B cell (primary cell): ENCODE measurements at regions of chr16 and their contacts with region 1.

Region 1: GRCh38 chr16:12067714-12068401 is 91.3 kb downstream of the SNX29 start:
- DNase-seq: peak; percentile 84
- ATAC-seq: peak; percentile 91
- H3K4me3 ChIP-seq: no peak overlapping the region
- H3K4me3 Mint-ChIP-seq: no peak overlapping the region
- H3K27ac ChIP-seq: no peak overlapping the region
- H3K27ac Mint-ChIP-seq: peak overlapping the region; percentile 61
- H3K4me1 ChIP-seq: peaks cover 0 to 4% of the 10 kb centered on the region in 2 donors
- H3K4me1 Mint-ChIP-seq: peaks cover 21% of the 10 kb centered on the region
- H3K27me3 ChIP-seq: no peaks in the 10 kb centered on the region
- H3K27me3 Mint-ChIP-seq: no peaks in the 10 kb centered on the region
- CTCF ChIP-seq: peak; percentile 94

Region 2: GRCh38 chr16:11639925-11640899 is 427.6 kb before region 1 on chr16:
- CTCF ChIA-PET with region 1: no interaction called
- POLR2A ChIA-PET with region 1: no interaction called
- intact Hi-C with region 1: no loop called
- DNase-seq: no peak
- ATAC-seq: no peak
- H3K4me3 ChIP-seq: no peak overlapping the region
- H3K4me3 Mint-ChIP-seq: no peak overlapping the region
- H3K27ac ChIP-seq: no peak overlapping the region
- H3K27ac Mint-ChIP-seq: no peak overlapping the region
- H3K4me1 ChIP-seq: peaks cover 7 to 9% of the 10 kb centered on the region in 2 donors
- H3K4me1 Mint-ChIP-seq: peaks cover 6% of the 10 kb centered on the region
- H3K27me3 ChIP-seq: no peaks in the 10 kb centered on the region
- H3K27me3 Mint-ChIP-seq: no peaks in the 10 kb centered on the region
- CTCF ChIP-seq: no peak

Region 3: DNA sequence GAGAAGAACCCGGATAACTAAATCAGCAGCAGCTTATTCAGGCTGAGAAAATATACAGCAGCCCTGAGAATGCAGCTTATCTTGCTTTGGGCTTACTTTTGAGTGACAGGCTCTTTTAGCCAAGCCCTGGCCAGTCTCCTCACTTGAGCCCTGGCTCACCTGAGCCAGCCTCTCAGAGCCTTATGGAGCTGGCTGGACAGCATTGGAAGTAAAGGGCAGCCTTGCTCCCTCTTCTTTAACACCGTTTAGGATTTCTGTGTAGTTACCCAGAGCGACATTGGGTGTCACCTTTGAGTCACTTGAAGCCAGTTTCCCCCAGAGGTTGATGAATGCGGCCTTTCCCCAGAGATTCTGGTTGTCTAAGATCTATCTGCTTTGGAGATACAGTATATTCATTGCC is 118.3 kb before region 1 on chr16:
- CTCF ChIA-PET with region 1: interaction called, 250 read pairs
- POLR2A ChIA-PET with region 1: interaction called, 4 read pairs
- intact Hi-C with region 1: loop called (anchors 1 kb)
- DNase-seq: peak; percentile 78
- ATAC-seq: peak; percentile 91
- H3K4me3 ChIP-seq: no peak overlapping the region
- H3K4me3 Mint-ChIP-seq: no peak overlapping the region
- H3K27ac ChIP-seq: no peak overlapping the region
- H3K27ac Mint-ChIP-seq: peak overlapping the region; percentile 64
- H3K4me1 ChIP-seq: peaks cover 13 to 14% of the 10 kb centered on the region in 2 donors
- H3K4me1 Mint-ChIP-seq: peaks cover 9% of the 10 kb centered on the region
- H3K27me3 ChIP-seq: no peaks in the 10 kb centered on the region
- H3K27me3 Mint-ChIP-seq: no peaks in the 10 kb centered on the region
- CTCF ChIP-seq: peak; percentile 87

Region 4: GRCh38 chr16:11972128-11972527 is 95.7 kb before region 1 on chr16:
- CTCF ChIA-PET with region 1: interaction called, 25 read pairs
- POLR2A ChIA-PET with region 1: no interaction called
- intact Hi-C with region 1: loop called (anchors 5 kb)
- DNase-seq: no peak
- ATAC-seq: no peak
- H3K4me3 ChIP-seq: no peak overlapping the region
- H3K4me3 Mint-ChIP-seq: no peak overlapping the region
- H3K27ac ChIP-seq: no peak overlapping the region
- H3K27ac Mint-ChIP-seq: peak overlapping the region; percentile 15
- H3K4me1 ChIP-seq: peaks cover 32 to 49% of the 10 kb centered on the region in 2 donors
- H3K4me1 Mint-ChIP-seq: peaks cover 39% of the 10 kb centered on the region
- H3K27me3 ChIP-seq: no peaks in the 10 kb centered on the region
- H3K27me3 Mint-ChIP-seq: no peaks in the 10 kb centered on the region
- CTCF ChIP-seq: peak; percentile 12

Region 5: DNA sequence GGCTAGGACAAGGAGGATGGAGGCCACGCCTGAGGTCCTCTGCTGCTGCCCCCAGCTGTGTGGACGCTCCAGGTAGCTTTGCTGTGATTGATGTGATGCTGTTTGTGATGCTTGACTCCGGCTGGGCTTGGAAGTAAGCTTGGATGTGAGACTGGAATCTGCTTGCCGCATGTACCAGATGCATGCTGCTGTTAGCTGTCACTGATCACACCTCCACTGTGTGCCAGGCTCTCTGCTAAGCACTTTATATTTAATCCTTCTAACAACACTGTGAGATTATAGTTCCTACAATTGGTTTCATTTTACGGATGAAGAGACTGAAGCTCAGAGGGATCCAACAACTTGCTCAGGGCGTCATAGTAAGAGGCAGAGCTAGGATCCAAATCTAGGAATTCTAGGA is 67.8 kb before region 1 on chr16:
- CTCF ChIA-PET with region 1: interaction called, 12 read pairs
- POLR2A ChIA-PET with region 1: no interaction called
- intact Hi-C with region 1: no loop called
- DNase-seq: no peak
- ATAC-seq: no peak
- H3K4me3 ChIP-seq: no peak overlapping the region
- H3K4me3 Mint-ChIP-seq: no peak overlapping the region
- H3K27ac ChIP-seq: no peak overlapping the region
- H3K27ac Mint-ChIP-seq: peak overlapping the region; percentile 16
- H3K4me1 ChIP-seq: peaks cover 31 to 38% of the 10 kb centered on the region in 2 donors
- H3K4me1 Mint-ChIP-seq: peaks cover 40% of the 10 kb centered on the region
- H3K27me3 ChIP-seq: no peaks in the 10 kb centered on the region
- H3K27me3 Mint-ChIP-seq: no peaks in the 10 kb centered on the region
- CTCF ChIP-seq: no peak

Region 6: GRCh38 chr16:12057266-12057665 is 10.6 kb before region 1 on chr16:
- CTCF ChIA-PET with region 1: interaction called, 42 read pairs
- POLR2A ChIA-PET with region 1: no interaction called
- intact Hi-C with region 1: no loop called
- DNase-seq: no peak
- ATAC-seq: no peak
- H3K4me3 ChIP-seq: no peak overlapping the region
- H3K4me3 Mint-ChIP-seq: no peak overlapping the region
- H3K27ac ChIP-seq: no peak overlapping the region
- H3K27ac Mint-ChIP-seq: peak overlapping the region; percentile 78
- H3K4me1 ChIP-seq: peaks cover 22 to 34% of the 10 kb centered on the region in 2 donors
- H3K4me1 Mint-ChIP-seq: peaks cover 36% of the 10 kb centered on the region
- H3K27me3 ChIP-seq: no peaks in the 10 kb centered on the region
- H3K27me3 Mint-ChIP-seq: no peaks in the 10 kb centered on the region
- CTCF ChIP-seq: no peak

Region 7: DNA sequence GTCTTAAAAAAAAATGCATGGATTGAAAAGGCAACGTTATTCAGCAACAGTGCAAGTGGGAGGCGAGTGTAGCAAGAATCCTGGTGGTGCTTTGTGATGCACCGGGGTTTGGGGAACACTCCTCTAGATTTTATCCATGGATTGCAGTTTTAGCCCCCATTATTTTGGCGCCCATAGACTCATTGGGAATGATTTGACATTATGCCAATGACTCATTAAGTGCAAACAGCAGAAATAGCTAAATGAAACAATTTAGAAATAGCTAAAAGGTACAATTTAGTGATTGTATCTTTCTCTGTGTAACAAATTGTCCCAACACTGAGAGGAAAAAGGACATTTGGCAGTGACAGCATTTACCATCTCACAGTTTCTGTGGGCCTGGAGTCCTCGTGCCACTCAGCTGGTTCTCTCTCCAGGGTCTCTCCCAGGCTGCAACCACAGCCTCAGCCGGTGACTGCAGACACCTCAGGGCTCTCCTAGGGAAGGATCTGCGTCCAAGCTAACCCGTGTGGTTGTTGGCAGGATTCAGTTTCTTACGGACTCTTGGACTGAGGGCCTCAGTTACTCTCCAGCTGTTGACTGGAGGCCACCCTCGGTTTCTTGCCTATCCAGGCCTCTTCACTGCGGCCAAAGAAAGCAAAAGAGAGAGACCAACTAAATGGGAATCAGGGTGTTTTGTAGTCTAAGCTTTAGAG is 307.3 kb after region 1 on chr16:
- CTCF ChIA-PET with region 1: no interaction called
- POLR2A ChIA-PET with region 1: no interaction called
- intact Hi-C with region 1: no loop called
- DNase-seq: no peak
- ATAC-seq: no peak
- H3K4me3 ChIP-seq: no peak overlapping the region
- H3K4me3 Mint-ChIP-seq: no peak overlapping the region
- H3K27ac ChIP-seq: no peak overlapping the region
- H3K27ac Mint-ChIP-seq: no peak overlapping the region
- H3K4me1 ChIP-seq: no peaks in the 10 kb centered on the region
- H3K4me1 Mint-ChIP-seq: peaks cover 8% of the 10 kb centered on the region
- H3K27me3 ChIP-seq: no peaks in the 10 kb centered on the region
- H3K27me3 Mint-ChIP-seq: no peaks in the 10 kb centered on the region
- CTCF ChIP-seq: no peak

Region 8: DNA sequence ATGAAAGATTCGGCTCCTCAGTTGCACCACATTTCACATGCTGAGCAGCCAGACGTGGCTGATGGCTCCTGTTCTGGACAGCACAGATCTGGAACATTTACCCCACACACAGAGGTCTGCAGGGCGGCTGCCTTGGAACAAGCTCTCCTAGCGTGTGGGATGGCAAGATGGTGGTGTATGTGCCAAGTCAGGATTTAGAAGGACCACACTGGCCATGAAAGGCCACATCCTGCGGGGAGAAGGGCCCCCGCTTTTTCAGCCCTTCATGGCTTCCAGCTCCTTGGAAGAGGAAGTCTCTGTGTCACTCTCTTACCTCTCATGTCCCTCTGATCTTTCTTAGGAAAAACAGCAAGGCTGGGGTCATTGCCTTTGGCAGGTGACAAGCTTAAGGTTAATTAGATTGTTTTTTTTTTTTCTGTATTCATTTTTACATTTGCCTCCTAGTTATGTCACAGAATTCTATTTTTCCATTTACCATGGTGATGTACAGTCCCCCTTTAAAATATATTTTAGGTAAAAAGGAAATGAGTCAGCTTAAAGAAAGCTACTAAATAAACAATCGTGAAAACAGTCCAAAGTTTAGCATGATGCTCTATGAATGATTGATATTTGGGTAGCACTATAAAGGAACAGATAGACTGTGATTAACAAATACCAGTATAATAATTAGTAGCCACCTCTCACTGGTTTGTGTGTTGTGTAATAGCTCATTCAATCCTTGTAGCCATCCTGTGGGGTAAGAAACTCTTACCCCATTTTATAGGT is 339.2 kb after region 1 on chr16:
- CTCF ChIA-PET with region 1: no interaction called
- POLR2A ChIA-PET with region 1: no interaction called
- intact Hi-C with region 1: no loop called
- DNase-seq: no peak
- ATAC-seq: no peak
- H3K4me3 ChIP-seq: no peak overlapping the region
- H3K4me3 Mint-ChIP-seq: no peak overlapping the region
- H3K27ac ChIP-seq: no peak overlapping the region
- H3K27ac Mint-ChIP-seq: peak overlapping the region; percentile 67
- H3K4me1 ChIP-seq: no peaks in the 10 kb centered on the region
- H3K4me1 Mint-ChIP-seq: peaks cover 8% of the 10 kb centered on the region
- H3K27me3 ChIP-seq: no peaks in the 10 kb centered on the region
- H3K27me3 Mint-ChIP-seq: no peaks in the 10 kb centered on the region
- CTCF ChIP-seq: no peak